CD8-positive, alpha-beta memory T cell (primary cell): ENCODE measurements at regions of chr11 and their contacts with region 1.

Region 1: DNA sequence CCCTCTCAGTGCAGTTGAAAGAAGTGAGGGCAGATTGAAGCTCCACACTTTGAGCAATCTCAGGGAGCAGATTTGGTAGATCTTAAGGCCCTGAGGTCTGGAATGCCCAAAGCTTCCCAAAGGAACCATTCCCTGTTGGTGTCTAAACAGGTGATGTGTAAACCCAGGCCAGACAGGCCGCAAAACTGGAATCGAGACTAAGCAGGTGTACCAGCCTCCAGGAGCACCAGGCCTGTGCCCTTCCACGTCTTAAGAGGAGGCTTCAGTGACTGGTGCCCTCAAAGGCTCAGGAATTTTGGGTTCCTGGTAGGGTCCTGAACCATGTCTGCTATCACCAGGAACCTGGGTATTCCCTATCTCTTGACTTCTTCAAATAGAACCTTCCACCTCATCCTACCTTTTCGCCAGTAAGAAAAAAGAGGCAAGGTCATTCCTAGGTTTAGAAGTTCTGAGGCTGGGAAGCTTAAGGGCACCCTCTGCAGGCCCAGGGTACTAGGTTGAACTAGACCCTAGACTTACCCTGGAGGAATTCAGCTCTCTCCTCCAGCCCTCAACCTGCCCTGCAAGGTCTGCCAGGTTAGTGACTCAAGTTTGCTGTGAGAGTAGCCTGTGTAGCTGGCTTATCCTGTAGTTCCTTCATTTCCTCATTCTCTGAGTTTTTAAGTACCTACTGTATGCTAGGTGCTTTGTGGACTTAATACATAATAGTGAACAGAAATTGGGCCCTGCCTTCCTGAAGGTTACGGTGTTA is 100.0 kb upstream of the NNMT start:
- DNase-seq: peak in 2 of 5 donors; percentile 32 to 53
- H3K4me3 ChIP-seq: no peak overlapping the region
- H3K4me3 Mint-ChIP-seq: no peak overlapping the region
- H3K27ac ChIP-seq: no peak overlapping the region
- H3K27ac Mint-ChIP-seq: peak overlapping the region in 7 of 8 donors; percentile 72 to 99 (median 94)
- H3K4me1 ChIP-seq: peaks cover 9% of the 10 kb centered on the region
- H3K4me1 Mint-ChIP-seq: peaks cover 22 to 35% (median 27%) of the 10 kb centered on the region in 3 donors
- H3K27me3 ChIP-seq: no peaks in the 10 kb centered on the region
- H3K27me3 Mint-ChIP-seq: peaks cover 0 to 1% of the 10 kb centered on the region in 2 donors

Region 2: GRCh38 chr11:113994077-113994954 is 201.8 kb before region 1 on chr11:
- CTCF ChIA-PET with region 1: interaction called, 19 read pairs
- POLR2A ChIA-PET with region 1: no interaction called
- DNase-seq: peak; percentile 9 to 58 (median 23)
- H3K4me3 ChIP-seq: no peak overlapping the region
- H3K4me3 Mint-ChIP-seq: no peak overlapping the region
- H3K27ac ChIP-seq: no peak overlapping the region
- H3K27ac Mint-ChIP-seq: no peak overlapping the region
- H3K4me1 ChIP-seq: no peaks in the 10 kb centered on the region
- H3K4me1 Mint-ChIP-seq: no peaks in the 10 kb centered on the region
- H3K27me3 ChIP-seq: peaks cover 17% of the 10 kb centered on the region
- H3K27me3 Mint-ChIP-seq: peaks cover 30 to 42% of the 10 kb centered on the region in 2 donors

Region 3: GRCh38 chr11:114036156-114036811 is 159.9 kb before region 1 on chr11:
- CTCF ChIA-PET with region 1: interaction called, 11 read pairs
- POLR2A ChIA-PET with region 1: no interaction called
- DNase-seq: peak; percentile 19 to 57 (median 42)
- H3K4me3 ChIP-seq: no peak overlapping the region
- H3K4me3 Mint-ChIP-seq: peak overlapping the region in 1 of 7 donors; percentile 29
- H3K27ac ChIP-seq: no peak overlapping the region
- H3K27ac Mint-ChIP-seq: peak overlapping the region in 1 of 8 donors; percentile 47
- H3K4me1 ChIP-seq: peaks cover 10% of the 10 kb centered on the region
- H3K4me1 Mint-ChIP-seq: peaks cover 5 to 8% (median 7%) of the 10 kb centered on the region in 3 donors
- H3K27me3 ChIP-seq: no peaks in the 10 kb centered on the region
- H3K27me3 Mint-ChIP-seq: peaks cover 10 to 16% of the 10 kb centered on the region in 2 donors

Region 4: DNA sequence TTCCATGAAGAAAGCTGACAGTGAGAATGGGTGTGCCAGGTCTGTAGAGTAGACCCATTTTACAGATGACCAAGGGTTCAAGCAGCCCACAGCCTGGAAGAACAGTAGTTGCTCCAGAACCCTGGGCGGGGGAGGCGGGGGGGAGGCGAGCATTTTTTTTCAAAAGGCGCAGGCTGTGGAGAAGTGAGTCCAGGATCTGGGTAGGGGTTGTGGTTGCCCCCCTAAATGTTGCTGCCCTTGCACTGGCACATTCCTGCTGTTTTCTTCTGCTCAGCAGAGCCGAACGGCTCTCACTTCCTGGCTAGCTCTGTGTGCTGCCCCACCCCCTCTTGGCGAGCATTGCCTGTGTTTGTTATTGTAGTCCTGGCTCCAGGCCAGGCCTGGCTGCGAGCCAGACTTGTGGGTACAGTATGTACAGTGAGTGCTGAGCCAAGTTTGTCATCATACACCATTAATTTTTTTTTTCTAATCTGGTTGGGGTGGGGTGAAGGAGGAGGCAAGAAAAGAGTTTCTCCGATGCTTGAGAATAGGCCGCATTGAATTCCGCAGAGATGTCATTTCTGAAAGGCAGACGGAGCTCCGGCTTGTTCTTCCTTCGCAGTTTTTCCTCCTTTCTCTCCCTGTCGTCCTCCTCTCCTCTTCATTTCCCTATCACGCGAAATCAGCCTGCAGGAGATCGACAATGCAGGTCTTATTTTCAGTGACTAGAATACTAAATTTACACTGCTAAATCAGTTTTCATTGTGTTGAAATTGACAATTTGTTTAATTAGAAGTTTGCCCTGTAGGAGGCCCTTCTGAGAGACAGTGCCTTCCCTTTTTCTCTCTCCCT is 36.1 kb before region 1 on chr11:
- CTCF ChIA-PET with region 1: interaction called, 14 read pairs
- POLR2A ChIA-PET with region 1: no interaction called
- DNase-seq: peak; percentile 91 to 99 (median 97)
- H3K4me3 ChIP-seq: peak overlapping the region; percentile 38
- H3K4me3 Mint-ChIP-seq: peak overlapping the region; percentile 69 to 89 (median 81)
- H3K27ac ChIP-seq: peak overlapping the region; percentile 7
- H3K27ac Mint-ChIP-seq: peak overlapping the region; percentile 81 to 97 (median 95)
- H3K4me1 ChIP-seq: peaks cover 56% of the 10 kb centered on the region
- H3K4me1 Mint-ChIP-seq: peaks cover 79 to 90% (median 87%) of the 10 kb centered on the region in 3 donors
- H3K27me3 ChIP-seq: no peaks in the 10 kb centered on the region
- H3K27me3 Mint-ChIP-seq: no peaks in the 10 kb centered on the region

Region 5: GRCh38 chr11:114307524-114308203 is 111.5 kb after region 1 on chr11:
- CTCF ChIA-PET with region 1: no interaction called
- POLR2A ChIA-PET with region 1: no interaction called
- DNase-seq: no peak
- H3K4me3 ChIP-seq: no peak overlapping the region
- H3K4me3 Mint-ChIP-seq: no peak overlapping the region
- H3K27ac ChIP-seq: no peak overlapping the region
- H3K27ac Mint-ChIP-seq: no peak overlapping the region
- H3K4me1 ChIP-seq: no peaks in the 10 kb centered on the region
- H3K4me1 Mint-ChIP-seq: no peaks in the 10 kb centered on the region
- H3K27me3 ChIP-seq: no peaks in the 10 kb centered on the region
- H3K27me3 Mint-ChIP-seq: peaks cover 28 to 71% of the 10 kb centered on the region in 2 donors